ENCODE measurements at regions of chr16 and their contacts with region 1.

Region 1: GRCh38 chr16:10729104-10730048 is 14.3 kb upstream of the NUBP1 start:
- DNase-seq: peak; percentile 38
- ATAC-seq: peak; percentile 14; the same call in 1 of the 2 replicates
- H3K4me3 ChIP-seq: no peak overlapping the region
- H3K27ac ChIP-seq: no peak overlapping the region
- H3K4me1 ChIP-seq: no peaks in the 10 kb centered on the region
- H3K27me3 ChIP-seq: no peaks in the 10 kb centered on the region
- CTCF ChIP-seq: no peak
- POLR2A ChIP-seq: no peak
- RAD21 ChIP-seq: peak; percentile 19; the same call in 1 of the 2 replicates

Region 2: GRCh38 chr16:10256784-10257641 is 472.4 kb before region 1 on chr16:
- CTCF ChIA-PET with region 1: no interaction called
- POLR2A ChIA-PET with region 1: no interaction called
- dilution Hi-C with region 1: no loop called
- in situ Hi-C with region 1: loop called (anchors 5 kb)
- intact Hi-C with region 1: no loop called
- DNase-seq: no peak
- ATAC-seq: peak; percentile 59
- H3K4me3 ChIP-seq: no peak overlapping the region
- H3K27ac ChIP-seq: no peak overlapping the region
- H3K4me1 ChIP-seq: no peaks in the 10 kb centered on the region
- H3K27me3 ChIP-seq: no peaks in the 10 kb centered on the region
- CTCF ChIP-seq: peak; percentile 63
- POLR2A ChIP-seq: no peak
- RAD21 ChIP-seq: peak; percentile 55

Measured in IMR-90 (cell line).